K562 (cell line): ENCODE measurements at regions of chr5 and their contacts with region 1.

Region 1: DNA sequence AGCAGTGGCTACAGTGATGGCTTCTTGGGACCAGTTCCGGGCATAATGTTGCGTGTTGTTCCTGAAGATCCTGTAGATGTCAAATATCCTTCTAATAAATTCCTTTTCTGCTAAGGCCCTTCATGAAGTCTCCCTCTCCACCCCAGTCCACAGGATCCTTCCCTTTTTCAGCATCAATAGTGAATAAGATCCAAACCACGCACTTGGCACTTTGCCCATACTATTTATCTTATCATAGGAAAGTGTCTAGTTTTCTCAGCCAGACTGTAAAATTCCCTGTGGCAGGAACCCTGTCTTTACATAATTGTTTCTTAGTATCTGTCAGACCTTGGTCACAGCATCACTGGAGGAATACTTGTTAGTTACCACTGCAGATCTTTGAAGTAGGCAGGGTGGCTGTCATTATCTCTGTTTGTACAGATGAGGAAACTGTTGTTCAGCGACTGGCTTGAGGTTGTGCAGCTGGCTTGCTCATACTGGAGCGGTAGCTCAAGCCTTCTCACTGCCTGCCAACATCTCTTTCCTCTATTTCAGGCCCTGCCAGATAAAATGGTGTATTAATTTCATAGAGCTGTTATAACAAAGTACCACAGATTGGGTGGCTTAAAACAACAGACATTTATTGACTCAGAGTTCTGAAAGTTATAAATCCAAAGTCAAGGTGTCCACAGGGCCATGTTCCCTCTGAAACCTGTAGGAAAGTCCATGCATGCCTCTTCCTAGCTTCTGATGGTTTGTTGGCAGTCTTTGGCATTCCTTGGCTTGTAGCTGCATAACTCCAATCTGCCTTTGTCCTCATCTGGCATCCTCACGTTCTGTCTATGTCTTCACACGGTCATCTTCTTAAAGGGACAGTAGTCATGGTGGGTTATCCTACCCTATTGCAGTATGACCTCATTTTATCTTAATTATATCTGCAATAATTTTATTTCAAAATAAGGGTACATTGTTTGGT is 33.5 kb upstream of the APC start:
- DNase-seq: peak in 3 of 4 experiments; percentile 23 to 87 (median 78)
- ATAC-seq: peak; percentile 41
- H3K4me3 ChIP-seq: no peak overlapping the region
- H3K27ac ChIP-seq: peak overlapping the region; percentile 32; the same call in 2 of the 3 replicates
- H3K4me1 ChIP-seq: peaks cover 25 to 35% of the 10 kb centered on the region in 2 experiments; a peak in 4 of 5 replicates
- H3K27me3 ChIP-seq: no peaks in the 10 kb centered on the region
- CTCF ChIP-seq: 0 out of 6 replicates have a peak, but pooled peaks of 1 of the 3 experiments have one; percentile 13
- EP300 ChIP-seq: peak; percentile 75
- POLR2A ChIP-seq: no peak
- RAD21 ChIP-seq: peak in 1 of 2 experiments; percentile 21; a peak in 1 of 4 replicates

Region 2: GRCh38 chr5:112752335-112752734 is 48.2 kb after region 1 on chr5:
- CTCF ChIA-PET with region 1: no interaction called
- POLR2A ChIA-PET with region 1: no interaction called
- in situ Hi-C with region 1: no loop called
- intact Hi-C with region 1: loop called (anchors 2 kb)
- DNase-seq: no peak
- ATAC-seq: no peak
- H3K4me3 ChIP-seq: no peak overlapping the region
- H3K27ac ChIP-seq: no peak overlapping the region
- H3K4me1 ChIP-seq: 0 out of 5 replicates have a peak, but pooled peaks cover 0 to 3% of the 10 kb centered on the region in 2 experiments
- H3K27me3 ChIP-seq: no peaks in the 10 kb centered on the region
- CTCF ChIP-seq: no peak
- EP300 ChIP-seq: no peak
- POLR2A ChIP-seq: no peak
- RAD21 ChIP-seq: no peak